WTC11 (cell line): ENCODE measurements at regions of chr11 and their contacts with region 1.

Region 1: DNA sequence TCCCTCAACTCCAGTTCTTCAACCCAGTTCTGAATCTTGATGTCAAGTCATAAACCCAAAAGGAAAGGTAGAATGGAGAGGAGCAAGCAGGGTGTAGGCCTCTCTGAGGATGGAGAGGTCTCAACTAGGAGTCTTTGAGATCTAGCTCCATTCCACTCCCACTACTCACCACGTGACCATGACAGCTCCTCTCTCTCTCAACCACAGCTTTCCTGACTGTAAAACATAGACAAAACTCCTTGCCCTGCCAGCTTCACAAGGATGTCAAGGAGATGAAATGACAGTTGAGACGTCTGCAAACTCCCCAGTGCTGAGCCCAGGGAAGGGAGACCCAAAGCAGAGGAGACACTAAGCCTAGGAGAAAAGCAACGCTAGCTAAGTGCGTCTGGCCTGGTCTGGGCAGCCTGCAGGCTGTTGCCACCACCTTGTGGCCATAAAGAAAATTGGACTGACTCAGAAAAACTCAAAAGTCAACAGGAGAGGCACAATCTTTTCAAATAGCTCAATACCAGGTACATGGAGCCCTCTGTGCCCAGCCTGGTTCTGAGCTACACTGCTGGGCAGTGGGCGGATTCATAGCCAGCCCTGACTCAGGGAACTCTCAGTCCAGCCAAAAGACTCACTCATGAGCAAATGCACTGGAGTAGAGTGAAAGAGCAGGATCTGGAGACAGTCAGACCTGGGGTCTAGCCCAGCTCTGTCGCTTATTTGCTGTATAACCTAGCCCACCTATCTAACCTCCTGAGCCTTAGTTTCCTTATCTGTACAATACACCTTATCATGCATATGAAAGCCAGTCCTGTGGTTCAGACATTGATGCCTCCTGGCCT is 3.4 kb downstream of the CLPB start:
- DNase-seq: peak; percentile 31
- ATAC-seq: peak; percentile 24
- H3K4me3 Mint-ChIP-seq: no peak overlapping the region
- H3K27ac Mint-ChIP-seq: peak overlapping the region; percentile 86
- H3K4me1 Mint-ChIP-seq: peaks cover 9% of the 10 kb centered on the region
- H3K27me3 Mint-ChIP-seq: no peaks in the 10 kb centered on the region
- CTCF ChIP-seq: peak; percentile 39; the same call in 1 of the 2 replicates

Region 2: GRCh38 chr11:72209101-72209500 is 221.9 kb before region 1 on chr11:
- CTCF ChIA-PET with region 1: no interaction called
- POLR2A ChIA-PET with region 1: no interaction called
- DNase-seq: no peak
- ATAC-seq: no peak
- H3K4me3 Mint-ChIP-seq: no peak overlapping the region
- H3K27ac Mint-ChIP-seq: no peak overlapping the region
- H3K4me1 Mint-ChIP-seq: no peaks in the 10 kb centered on the region
- H3K27me3 Mint-ChIP-seq: peaks cover 11% of the 10 kb centered on the region
- CTCF ChIP-seq: no peak

Region 3: GRCh38 chr11:72222907-72223614 is 207.9 kb before region 1 on chr11:
- CTCF ChIA-PET with region 1: interaction called, 13 read pairs
- POLR2A ChIA-PET with region 1: no interaction called
- DNase-seq: peak; percentile 96
- ATAC-seq: peak; percentile 72
- H3K4me3 Mint-ChIP-seq: peak overlapping the region; percentile 73
- H3K27ac Mint-ChIP-seq: peak overlapping the region; percentile 80
- H3K4me1 Mint-ChIP-seq: peaks cover 29% of the 10 kb centered on the region
- H3K27me3 Mint-ChIP-seq: peaks cover 7% of the 10 kb centered on the region; the same call in 1 of the 2 replicates
- CTCF ChIP-seq: no peak

Region 4: DNA sequence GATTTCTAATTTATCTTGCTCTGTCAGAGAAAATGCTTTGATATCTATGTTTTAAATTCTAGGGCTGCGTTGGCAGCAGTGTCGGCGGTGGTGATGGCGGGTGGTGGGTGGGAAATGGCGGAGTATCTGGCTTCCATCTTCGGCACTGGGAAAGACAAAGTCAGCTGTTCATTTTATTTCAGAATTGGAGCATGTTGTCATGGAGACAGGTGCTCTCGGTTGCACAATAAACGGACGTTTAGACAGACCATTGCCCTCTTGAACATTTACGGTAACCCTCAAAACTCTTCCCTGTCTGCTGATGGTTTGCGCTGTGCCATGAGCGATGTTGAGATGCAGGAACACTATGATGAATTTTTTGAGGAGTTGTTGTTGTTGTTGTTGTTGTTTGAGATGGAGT is 150.9 kb before region 1 on chr11:
- CTCF ChIA-PET with region 1: interaction called, 10 read pairs
- POLR2A ChIA-PET with region 1: no interaction called
- DNase-seq: no peak
- ATAC-seq: no peak
- H3K4me3 Mint-ChIP-seq: no peak overlapping the region
- H3K27ac Mint-ChIP-seq: no peak overlapping the region
- H3K4me1 Mint-ChIP-seq: no peaks in the 10 kb centered on the region
- H3K27me3 Mint-ChIP-seq: peaks cover 14% of the 10 kb centered on the region; the same call in 1 of the 2 replicates
- CTCF ChIP-seq: no peak

Region 5: GRCh38 chr11:72333661-72334060 is 97.3 kb before region 1 on chr11:
- CTCF ChIA-PET with region 1: interaction called, 132 read pairs
- POLR2A ChIA-PET with region 1: interaction called, 5 read pairs
- DNase-seq: peak; percentile 69
- ATAC-seq: peak; percentile 99
- H3K4me3 Mint-ChIP-seq: no peak overlapping the region
- H3K27ac Mint-ChIP-seq: peak overlapping the region; percentile 43; the same call in 1 of the 2 replicates
- H3K4me1 Mint-ChIP-seq: peaks cover 13% of the 10 kb centered on the region
- H3K27me3 Mint-ChIP-seq: no peaks in the 10 kb centered on the region
- CTCF ChIP-seq: no peak

Region 6: DNA sequence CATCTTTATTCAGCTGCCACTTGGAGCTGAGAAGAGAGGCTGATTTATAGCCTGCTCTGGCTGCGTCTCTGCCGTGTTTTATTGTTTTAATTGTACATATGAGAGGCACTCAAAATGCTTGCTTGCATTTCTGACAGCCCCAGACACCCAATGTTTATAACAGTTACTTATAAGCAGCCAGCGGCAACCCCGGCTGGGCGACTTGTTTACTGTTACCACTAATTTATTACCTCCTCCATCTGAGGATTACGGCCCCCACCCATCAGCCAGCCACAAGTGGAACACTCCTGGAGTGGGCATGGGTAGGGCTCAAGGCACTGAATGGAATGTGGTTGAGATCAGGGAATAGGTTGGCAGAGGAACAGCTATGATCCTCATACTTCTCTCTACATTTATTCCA is 57.8 kb before region 1 on chr11:
- CTCF ChIA-PET with region 1: interaction called, 14 read pairs
- POLR2A ChIA-PET with region 1: no interaction called
- DNase-seq: no peak
- ATAC-seq: no peak
- H3K4me3 Mint-ChIP-seq: no peak overlapping the region
- H3K27ac Mint-ChIP-seq: no peak overlapping the region
- H3K4me1 Mint-ChIP-seq: peaks cover 3% of the 10 kb centered on the region
- H3K27me3 Mint-ChIP-seq: no peaks in the 10 kb centered on the region
- CTCF ChIP-seq: no peak

Region 7: GRCh38 chr11:72454791-72455190 is 23.8 kb after region 1 on chr11:
- CTCF ChIA-PET with region 1: interaction called, 84 read pairs
- POLR2A ChIA-PET with region 1: no interaction called
- DNase-seq: peak; percentile 17
- ATAC-seq: peak; percentile 67; the same call in 1 of the 2 replicates
- H3K4me3 Mint-ChIP-seq: no peak overlapping the region
- H3K27ac Mint-ChIP-seq: no peak overlapping the region
- H3K4me1 Mint-ChIP-seq: 0 out of 2 replicates have a peak, but pooled peaks cover 2% of the 10 kb centered on the region
- H3K27me3 Mint-ChIP-seq: peaks cover 8% of the 10 kb centered on the region
- CTCF ChIP-seq: no peak

Region 8: DNA sequence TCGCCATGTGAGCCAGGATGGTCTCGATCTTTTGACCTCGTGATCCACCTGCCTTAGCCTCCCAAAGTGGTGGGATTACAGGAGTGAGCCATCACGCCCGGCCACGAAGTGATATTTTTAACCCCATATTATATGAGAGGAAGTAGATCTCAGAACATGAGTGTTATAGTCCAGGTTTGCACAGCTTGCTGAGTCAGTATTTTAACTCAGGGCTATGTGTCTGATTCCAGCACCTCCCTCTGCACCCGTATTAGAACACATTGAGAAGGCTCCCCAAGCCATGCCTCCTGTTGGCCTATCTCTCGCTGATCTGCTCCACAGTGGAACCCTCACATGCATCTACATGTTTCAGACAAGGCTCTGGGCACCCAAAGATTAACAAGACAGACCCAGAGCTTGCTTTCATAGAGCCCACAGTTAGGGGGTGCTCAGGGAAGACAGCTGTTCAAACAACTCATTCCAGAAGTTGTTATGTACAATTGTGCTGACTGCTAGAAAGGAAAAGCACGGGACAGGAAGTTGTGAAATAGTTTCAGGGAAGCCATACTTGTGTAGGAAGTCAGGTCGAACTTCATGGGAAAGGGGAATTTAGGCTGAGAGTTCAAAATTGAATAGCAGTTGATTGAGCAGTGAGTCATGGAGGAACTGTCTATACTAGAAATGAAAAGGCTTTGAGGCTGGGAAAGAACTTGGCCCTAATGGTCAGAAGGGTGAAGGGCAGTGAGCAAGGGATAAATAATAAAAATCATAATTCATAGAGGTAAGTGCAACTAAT is 52.6 kb after region 1 on chr11:
- CTCF ChIA-PET with region 1: no interaction called
- POLR2A ChIA-PET with region 1: no interaction called
- DNase-seq: no peak
- ATAC-seq: no peak
- H3K4me3 Mint-ChIP-seq: no peak overlapping the region
- H3K27ac Mint-ChIP-seq: no peak overlapping the region
- H3K4me1 Mint-ChIP-seq: no peaks in the 10 kb centered on the region
- H3K27me3 Mint-ChIP-seq: no peaks in the 10 kb centered on the region
- CTCF ChIP-seq: no peak

Region 9: DNA sequence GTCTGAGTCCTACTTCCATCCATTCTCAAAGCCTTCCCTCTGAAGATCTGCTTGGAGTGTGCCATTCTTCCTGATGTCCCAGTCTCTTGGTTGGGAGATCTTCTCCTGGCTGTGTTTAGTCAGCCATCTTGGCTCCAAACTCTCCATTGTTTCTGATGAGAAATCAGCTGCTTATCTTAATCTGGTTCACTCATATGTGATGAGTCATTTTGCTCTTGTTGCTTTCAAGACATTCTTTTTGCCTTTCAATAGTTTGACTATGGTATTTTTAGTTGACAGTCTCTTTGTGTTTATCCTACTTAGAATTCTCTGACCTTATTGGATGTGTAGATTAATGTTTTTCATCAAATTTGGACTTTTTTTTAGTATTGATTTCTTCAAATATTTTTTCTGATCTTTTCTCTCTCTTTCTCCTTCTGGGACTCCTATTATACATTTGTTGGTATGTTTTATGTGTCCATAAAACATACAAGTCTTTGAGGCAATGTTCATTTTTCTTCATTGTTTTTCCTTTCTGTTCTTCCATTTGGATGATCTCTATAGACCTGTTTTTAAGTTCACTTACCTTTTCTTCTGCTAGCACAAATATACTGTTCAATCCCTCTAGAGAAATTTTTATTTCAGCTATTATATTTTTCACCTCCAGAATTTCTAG is 80.6 kb after region 1 on chr11:
- CTCF ChIA-PET with region 1: no interaction called
- POLR2A ChIA-PET with region 1: no interaction called
- DNase-seq: no peak
- ATAC-seq: no peak
- H3K4me3 Mint-ChIP-seq: no peak overlapping the region
- H3K27ac Mint-ChIP-seq: no peak overlapping the region
- H3K4me1 Mint-ChIP-seq: peaks cover 9% of the 10 kb centered on the region
- H3K27me3 Mint-ChIP-seq: peaks cover 25% of the 10 kb centered on the region
- CTCF ChIP-seq: no peak

Region 10: DNA sequence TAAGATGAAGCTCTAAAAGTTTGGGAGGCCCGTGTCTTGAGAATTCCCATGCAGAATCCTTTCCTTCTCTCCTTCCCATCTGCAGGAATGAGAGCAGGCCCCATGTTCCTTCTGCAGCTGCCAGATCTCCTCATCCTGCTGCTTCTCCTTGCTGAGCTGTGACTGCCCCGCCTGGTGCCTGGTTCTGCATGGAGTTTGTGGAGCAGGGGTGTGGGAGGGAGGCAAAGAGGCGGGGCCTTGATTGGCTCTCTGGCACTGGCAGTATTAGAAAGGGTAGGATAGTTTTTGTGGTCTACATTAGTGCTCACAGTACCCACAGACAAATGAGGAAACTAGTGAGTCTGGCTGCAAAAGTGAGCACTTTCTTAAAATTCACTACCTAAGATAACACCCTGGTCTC is 94.5 kb after region 1 on chr11:
- CTCF ChIA-PET with region 1: no interaction called
- POLR2A ChIA-PET with region 1: no interaction called
- DNase-seq: peak; percentile 29
- ATAC-seq: peak; percentile 96
- H3K4me3 Mint-ChIP-seq: no peak overlapping the region
- H3K27ac Mint-ChIP-seq: no peak overlapping the region
- H3K4me1 Mint-ChIP-seq: no peaks in the 10 kb centered on the region; the same call in 1 of the 2 replicates
- H3K27me3 Mint-ChIP-seq: no peaks in the 10 kb centered on the region
- CTCF ChIP-seq: no peak